ENCODE measurements at regions of chr14 and their contacts with region 1.

Region 1: GRCh38 chr14:53055003-53055402 is 98.1 kb downstream of the DDHD1 start:
- DNase-seq: no peak
- H3K4me3 ChIP-seq: no peak overlapping the region
- H3K27ac ChIP-seq: no peak overlapping the region
- H3K4me1 ChIP-seq: peaks cover 0 to 11% (median 0%) of the 10 kb centered on the region in 4 donors
- H3K27me3 ChIP-seq: no peaks in the 10 kb centered on the region
- CTCF ChIP-seq: peak; percentile 50 to 68

Region 2: GRCh38 chr14:52824507-52824906 is 230.5 kb before region 1 on chr14:
- intact Hi-C with region 1: loop called (anchors 10 kb)
- DNase-seq: no peak
- H3K4me3 ChIP-seq: no peak overlapping the region
- H3K27ac ChIP-seq: no peak overlapping the region
- H3K4me1 ChIP-seq: peaks cover 0 to 13% (median 0%) of the 10 kb centered on the region in 4 donors
- H3K27me3 ChIP-seq: no peaks in the 10 kb centered on the region
- CTCF ChIP-seq: no peak

Region 3: DNA sequence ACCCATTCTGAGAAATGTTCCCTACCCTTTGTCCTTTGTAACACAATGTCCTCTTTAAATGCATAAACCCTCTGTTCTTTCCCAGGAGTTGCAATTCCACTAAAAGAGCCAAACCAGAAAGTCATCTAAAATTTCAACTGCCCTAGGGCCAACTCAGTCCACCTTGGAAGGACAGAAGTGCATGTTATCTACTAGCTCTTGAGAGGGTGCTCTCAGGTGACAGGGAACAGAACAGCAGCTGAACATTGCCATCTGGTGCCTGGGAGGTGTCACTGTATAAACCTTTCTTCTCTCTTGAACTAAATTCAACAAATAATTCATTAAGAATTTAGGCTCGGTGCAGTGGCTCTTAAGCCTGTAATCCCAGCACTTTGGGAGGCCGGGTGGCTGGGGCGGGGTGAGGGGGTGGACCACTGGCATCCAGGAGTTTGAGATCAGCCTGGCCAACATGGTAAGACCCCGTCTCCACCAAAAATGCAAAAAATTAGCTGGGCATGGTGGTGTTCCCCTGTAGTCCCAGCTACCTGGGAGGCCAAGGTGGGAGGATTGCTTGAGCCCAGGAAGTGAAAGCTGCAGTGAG is 93.9 kb before region 1 on chr14:
- intact Hi-C with region 1: loop called (anchors 5 kb)
- DNase-seq: peak; percentile 49 to 66
- H3K4me3 ChIP-seq: no peak overlapping the region
- H3K27ac ChIP-seq: peak overlapping the region; percentile 30 to 51
- H3K4me1 ChIP-seq: peaks cover 0 to 10% (median 3%) of the 10 kb centered on the region in 4 donors
- H3K27me3 ChIP-seq: no peaks in the 10 kb centered on the region
- CTCF ChIP-seq: peak; percentile 72 to 84

Region 4: GRCh38 chr14:53109105-53110041 is 54.4 kb after region 1 on chr14:
- intact Hi-C with region 1: no loop called
- DNase-seq: no peak
- H3K4me3 ChIP-seq: peak overlapping the region; percentile 30 to 45
- H3K27ac ChIP-seq: peak overlapping the region; percentile 38 to 53
- H3K4me1 ChIP-seq: peaks cover 0 to 5% (median 0%) of the 10 kb centered on the region in 4 donors
- H3K27me3 ChIP-seq: no peaks in the 10 kb centered on the region
- CTCF ChIP-seq: no peak

Measured in tibial artery (tissue), 4 donors.